ENCODE measurements at regions of chr6 and their contacts with region 1.

Region 1: GRCh38 chr6:110389689-110390382 is 25.5 kb downstream of the DDO start:
- DNase-seq: no peak
- ATAC-seq: no peak
- H3K4me3 ChIP-seq: no peak overlapping the region
- H3K27ac ChIP-seq: no peak overlapping the region
- H3K4me1 ChIP-seq: no peaks in the 10 kb centered on the region
- H3K27me3 ChIP-seq: no peaks in the 10 kb centered on the region
- CTCF ChIP-seq: no peak
- EP300 ChIP-seq: no peak
- POLR2A ChIP-seq: no peak
- RAD21 ChIP-seq: no peak

Region 2: GRCh38 chr6:109526905-109527628 is 862.8 kb before region 1 on chr6:
- CTCF ChIA-PET with region 1: interaction called, 3 read pairs
- POLR2A ChIA-PET with region 1: no interaction called
- RAD21 ChIA-PET with region 1: no interaction called
- SMC1A ChIA-PET with region 1: interaction called, 3 read pairs
- in situ Hi-C with region 1: loop called (anchors 5 kb)
- intact Hi-C with region 1: loop called (anchors 2 kb)
- DNase-seq: peak; percentile 28
- ATAC-seq: peak; percentile 97
- H3K4me3 ChIP-seq: no peak overlapping the region
- H3K27ac ChIP-seq: no peak overlapping the region
- H3K4me1 ChIP-seq: no peaks in the 10 kb centered on the region
- H3K27me3 ChIP-seq: no peaks in the 10 kb centered on the region
- CTCF ChIP-seq: peak; percentile 54 to 80 (median 67)
- EP300 ChIP-seq: no peak
- POLR2A ChIP-seq: no peak
- RAD21 ChIP-seq: peak; percentile 79

Region 3: GRCh38 chr6:110053395-110054240 is 336.2 kb before region 1 on chr6:
- CTCF ChIA-PET with region 1: interaction called, 3 read pairs
- POLR2A ChIA-PET with region 1: no interaction called
- RAD21 ChIA-PET with region 1: no interaction called
- SMC1A ChIA-PET with region 1: interaction called, 3 read pairs
- in situ Hi-C with region 1: loop called (anchors 5 kb)
- intact Hi-C with region 1: no loop called
- DNase-seq: no peak
- ATAC-seq: peak; percentile 61
- H3K4me3 ChIP-seq: no peak overlapping the region
- H3K27ac ChIP-seq: no peak overlapping the region
- H3K4me1 ChIP-seq: no peaks in the 10 kb centered on the region
- H3K27me3 ChIP-seq: no peaks in the 10 kb centered on the region; a peak in 1 of 4 replicates
- CTCF ChIP-seq: peak; percentile 53 to 69 (median 67); a peak in 5 of 6 replicates
- EP300 ChIP-seq: no peak
- POLR2A ChIP-seq: no peak
- RAD21 ChIP-seq: peak; percentile 61

Region 4: DNA sequence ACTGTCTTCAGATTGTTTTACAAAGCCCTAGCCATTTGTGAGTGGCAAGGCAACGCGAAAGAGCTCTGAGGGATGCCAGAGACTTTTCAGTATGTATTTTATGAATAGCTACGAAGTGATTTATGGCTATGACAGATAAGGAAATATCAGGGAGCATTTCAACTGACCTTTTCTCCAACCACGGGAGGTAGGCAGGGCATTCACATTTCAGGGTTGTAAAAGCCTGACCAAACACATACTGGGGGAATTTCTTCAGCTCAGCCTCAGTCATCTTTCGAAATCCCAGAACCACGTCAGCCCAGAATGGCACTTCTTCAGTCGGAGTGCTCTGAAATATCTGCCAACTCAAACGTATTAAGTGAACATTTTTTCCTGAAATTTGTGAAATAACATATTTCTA is 14.8 kb after region 1 on chr6:
- CTCF ChIA-PET with region 1: interaction called, 14 read pairs
- POLR2A ChIA-PET with region 1: no interaction called
- RAD21 ChIA-PET with region 1: interaction called, 3 read pairs
- SMC1A ChIA-PET with region 1: interaction called, 4 read pairs
- in situ Hi-C with region 1: no loop called
- intact Hi-C with region 1: no loop called
- DNase-seq: no peak
- ATAC-seq: no peak
- H3K4me3 ChIP-seq: no peak overlapping the region
- H3K27ac ChIP-seq: no peak overlapping the region
- H3K4me1 ChIP-seq: no peaks in the 10 kb centered on the region
- H3K27me3 ChIP-seq: no peaks in the 10 kb centered on the region; a peak in 3 of 4 replicates
- CTCF ChIP-seq: no peak
- EP300 ChIP-seq: no peak
- POLR2A ChIP-seq: no peak
- RAD21 ChIP-seq: no peak